ENCODE measurements at regions of chr1 and their contacts with region 1.

Region 1: GRCh38 chr1:16073490-16074119 is at the start of gene FAM131C:
- DNase-seq: peak; percentile 39
- ATAC-seq: peak; percentile 82
- H3K4me3 Mint-ChIP-seq: peak within 1 kb of the TSS; percentile 73
- H3K27ac Mint-ChIP-seq: peak within 1 kb of the TSS; percentile 48
- H3K4me1 Mint-ChIP-seq: peaks cover 43% of the 10 kb centered on the region
- H3K27me3 Mint-ChIP-seq: peaks cover 18% of the 10 kb centered on the region
- total RNA-seq, gene FAM131C: 6.0 to 6.1 TPM

Region 2: GRCh38 chr1:15835741-15836510 is 237.7 kb before region 1 on chr1:
- CTCF ChIA-PET with region 1: no interaction called
- POLR2A ChIA-PET with region 1: no interaction called
- DNase-seq: peak; percentile 99
- ATAC-seq: peak; percentile 61
- H3K4me3 Mint-ChIP-seq: peak overlapping the region; percentile 87
- H3K27ac Mint-ChIP-seq: peak overlapping the region; percentile 98
- H3K4me1 Mint-ChIP-seq: peaks cover 33% of the 10 kb centered on the region
- H3K27me3 Mint-ChIP-seq: no peaks in the 10 kb centered on the region

Region 3: DNA sequence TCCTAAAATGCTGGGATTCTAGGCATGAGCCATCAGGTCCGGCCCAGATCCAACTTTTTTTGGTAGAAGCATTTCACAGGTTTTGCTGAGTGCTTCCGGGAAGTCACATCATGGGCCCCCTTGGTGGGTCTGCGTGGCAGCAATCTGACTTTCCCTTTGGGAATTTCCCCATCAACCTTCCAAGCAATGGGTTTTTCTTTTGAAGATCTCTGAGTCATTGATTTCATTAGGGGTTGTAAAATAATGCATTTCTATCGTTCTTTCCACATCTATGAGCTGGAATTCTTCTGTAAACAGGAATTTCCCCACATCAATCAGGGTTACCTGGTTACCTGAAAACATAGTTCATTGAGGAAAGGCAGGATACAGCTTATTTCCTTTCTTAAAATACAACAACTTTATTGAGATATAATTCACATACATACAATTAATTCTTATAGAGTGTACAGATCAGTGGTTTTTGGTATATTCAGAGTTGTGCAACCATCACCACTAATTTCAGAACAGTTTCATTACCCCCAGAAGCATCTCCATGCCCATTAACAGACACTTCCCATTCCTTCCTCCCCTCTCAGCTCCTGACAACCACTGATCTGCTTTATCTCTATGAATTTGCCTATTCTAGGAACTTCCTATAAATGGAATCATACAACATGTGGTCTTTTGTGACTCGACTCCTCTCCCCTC is 87.9 kb before region 1 on chr1:
- CTCF ChIA-PET with region 1: no interaction called
- POLR2A ChIA-PET with region 1: no interaction called
- DNase-seq: no peak
- ATAC-seq: no peak
- H3K4me3 Mint-ChIP-seq: no peak overlapping the region
- H3K27ac Mint-ChIP-seq: no peak overlapping the region
- H3K4me1 Mint-ChIP-seq: no peaks in the 10 kb centered on the region
- H3K27me3 Mint-ChIP-seq: no peaks in the 10 kb centered on the region

Region 4: GRCh38 chr1:16187748-16188401 is 114.3 kb after region 1 on chr1:
- CTCF ChIA-PET with region 1: interaction called, 244 read pairs
- POLR2A ChIA-PET with region 1: no interaction called
- DNase-seq: peak; percentile 81
- ATAC-seq: peak; percentile 93
- H3K4me3 Mint-ChIP-seq: no peak overlapping the region
- H3K27ac Mint-ChIP-seq: no peak overlapping the region
- H3K4me1 Mint-ChIP-seq: no peaks in the 10 kb centered on the region
- H3K27me3 Mint-ChIP-seq: peaks cover 10% of the 10 kb centered on the region